Heart right ventricle (tissue), 16 donors: ENCODE measurements at regions of chr9 and their contacts with region 1.

Region 1: DNA sequence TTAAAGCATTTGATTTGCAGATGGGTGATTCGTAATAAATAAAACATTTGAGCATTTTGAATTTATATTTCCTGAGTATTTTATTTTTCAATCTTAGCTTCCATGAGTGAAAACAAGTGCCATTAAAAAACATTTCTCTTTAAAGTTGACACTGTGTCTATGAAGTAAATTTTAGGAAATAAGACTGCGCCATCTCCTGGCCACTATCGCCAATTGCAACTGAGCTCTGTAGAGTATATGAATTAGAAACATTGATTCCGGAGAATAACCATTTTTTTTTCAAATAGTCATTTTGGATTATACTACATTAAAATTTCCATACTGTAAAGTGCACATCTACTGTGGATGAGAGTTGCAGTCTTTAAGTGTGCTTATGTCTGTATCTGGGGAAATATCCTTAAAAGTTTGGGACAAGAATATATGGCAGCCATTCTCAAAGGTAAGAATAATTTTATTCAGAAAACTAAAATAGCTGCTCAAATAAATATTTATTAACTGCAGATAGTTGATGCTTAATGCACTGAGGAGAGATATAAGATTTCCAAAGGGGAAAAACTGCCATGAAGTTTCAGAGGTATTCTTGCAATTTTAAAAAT is 5.9 kb downstream of the DMRTA1 start:
- DNase-seq: peak in 1 of 2 donors; percentile 21
- ATAC-seq: peak in 1 of 8 donors; percentile 37
- H3K4me3 ChIP-seq: no peak overlapping the region
- H3K27ac ChIP-seq: no peak overlapping the region
- H3K4me1 ChIP-seq: peaks cover 0 to 5% (median 1%) of the 10 kb centered on the region in 9 donors
- H3K27me3 ChIP-seq: peaks cover 0 to 34% (median 5%) of the 10 kb centered on the region in 7 donors
- CTCF ChIP-seq: peak; percentile 49 to 86 (median 78)

Region 2: GRCh38 chr9:22244141-22245011 is 208.1 kb before region 1 on chr9:
- intact Hi-C with region 1: loop called in 5 of 10 experiments (anchors 5 to 10 kb)
- DNase-seq: no peak
- ATAC-seq: peak in 2 of 8 donors; percentile 33 to 53
- H3K4me3 ChIP-seq: peak overlapping the region in 5 of 10 donors; percentile 3 to 30 (median 20)
- H3K27ac ChIP-seq: no peak overlapping the region
- H3K4me1 ChIP-seq: peaks cover 0 to 19% (median 0%) of the 10 kb centered on the region in 9 donors
- H3K27me3 ChIP-seq: peaks cover 0 to 10% (median 0%) of the 10 kb centered on the region in 7 donors
- CTCF ChIP-seq: peak in 8 of 9 donors; percentile 19 to 62 (median 44)

Region 3: DNA sequence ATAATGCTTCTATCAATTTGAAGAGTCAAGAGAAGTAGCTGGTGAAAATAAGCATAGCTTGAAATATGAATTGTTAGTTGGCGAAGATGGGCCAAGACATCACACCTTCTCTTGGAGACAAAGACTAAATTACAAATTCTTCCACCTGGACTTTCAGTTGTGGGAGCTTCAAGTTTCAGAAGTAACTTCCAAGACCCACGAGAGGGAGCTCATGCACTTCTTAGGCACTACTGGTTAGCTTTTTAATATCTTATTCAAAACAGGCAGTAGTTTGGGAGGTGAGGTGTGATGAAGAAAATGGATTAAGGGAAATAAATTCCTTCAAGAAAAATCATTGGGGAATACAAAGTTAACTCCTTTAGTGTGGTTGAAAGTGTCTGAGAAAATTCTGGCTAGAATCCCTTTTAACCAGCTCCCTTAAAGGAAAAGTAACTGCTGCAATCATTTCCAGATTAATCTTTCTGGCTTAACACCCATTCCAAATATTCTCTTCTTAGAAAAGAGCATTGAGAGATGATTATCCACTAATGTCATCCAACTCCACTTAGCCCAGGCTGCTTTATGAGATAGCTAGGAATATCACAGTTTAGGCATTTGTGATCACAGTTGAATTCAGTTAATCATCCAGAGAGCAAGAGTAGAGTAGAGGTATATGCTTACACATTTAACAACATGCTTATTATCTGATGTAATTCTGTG is 145.4 kb before region 1 on chr9:
- intact Hi-C with region 1: loop called (anchors 2 to 10 kb)
- DNase-seq: peak in 1 of 2 donors; percentile 13
- ATAC-seq: peak in 1 of 8 donors; percentile 47
- H3K4me3 ChIP-seq: no peak overlapping the region
- H3K27ac ChIP-seq: no peak overlapping the region
- H3K4me1 ChIP-seq: no peaks in the 10 kb centered on the region
- H3K27me3 ChIP-seq: peaks cover 0 to 28% (median 0%) of the 10 kb centered on the region in 7 donors
- CTCF ChIP-seq: peak; percentile 22 to 71 (median 64)